Activated CD4-positive, alpha-beta memory T cell treated with anti-CD3 and anti-CD28 coated beads for 36 hours (primary cell): ENCODE measurements at regions of chr17 and their contacts with region 1.

Region 1: DNA sequence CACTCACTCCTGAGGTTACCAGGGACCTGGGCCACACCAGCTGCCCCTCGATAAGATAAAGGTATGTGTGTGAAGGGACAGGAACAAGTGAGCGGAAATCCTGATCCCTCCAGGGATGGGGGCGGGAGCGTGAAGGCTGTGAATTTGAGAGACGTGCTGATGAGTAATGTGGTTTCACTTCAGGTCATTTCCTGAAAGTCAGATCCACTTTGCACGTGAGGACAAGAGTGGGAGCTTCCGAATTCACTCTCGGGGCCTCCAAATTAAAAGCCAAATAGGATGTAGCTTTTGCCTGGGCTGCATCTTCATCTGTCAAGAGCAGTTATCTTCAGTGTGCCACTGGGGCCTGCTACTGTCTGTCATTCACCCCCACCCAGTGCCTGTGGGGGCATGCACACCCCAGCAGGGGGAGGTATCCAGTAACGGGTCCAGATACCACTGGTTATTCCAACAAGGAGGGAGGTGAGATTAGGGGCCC is 87.4 kb upstream of the LHX1 start:
- DNase-seq: peak; percentile 88
- H3K4me3 Mint-ChIP-seq: peak overlapping the region; percentile 62
- H3K27ac Mint-ChIP-seq: peak overlapping the region; percentile 82
- H3K4me1 Mint-ChIP-seq: peaks cover 36% of the 10 kb centered on the region
- H3K27me3 Mint-ChIP-seq: peaks cover under 1% of the 10 kb centered on the region

Region 2: DNA sequence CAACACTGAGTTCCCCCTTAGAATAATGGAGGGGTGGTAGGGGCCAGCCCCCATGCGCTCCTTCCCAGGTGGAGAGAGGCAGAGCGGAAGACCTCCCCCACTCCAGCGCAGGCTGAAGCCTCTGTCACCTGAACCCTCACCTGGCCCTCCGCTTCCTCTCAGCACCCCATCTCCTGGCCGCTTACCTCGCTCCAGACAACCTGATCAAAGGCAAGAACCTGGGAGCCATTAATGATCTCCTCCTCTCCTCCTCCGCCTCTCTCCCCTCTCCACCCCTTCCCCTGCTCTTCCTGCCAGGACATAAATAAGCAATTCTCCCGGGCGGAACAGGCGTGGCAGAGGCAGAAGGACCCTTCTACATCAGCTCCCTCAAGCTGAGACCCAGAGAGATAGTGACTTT is 22.8 kb before region 1 on chr17:
- CTCF ChIA-PET with region 1: no interaction called
- POLR2A ChIA-PET with region 1: no interaction called
- intact Hi-C with region 1: no loop called
- DNase-seq: no peak
- H3K4me3 Mint-ChIP-seq: no peak overlapping the region
- H3K27ac Mint-ChIP-seq: no peak overlapping the region
- H3K4me1 Mint-ChIP-seq: no peaks in the 10 kb centered on the region
- H3K27me3 Mint-ChIP-seq: peaks cover 33% of the 10 kb centered on the region

Region 3: GRCh38 chr17:36921095-36921851 is 71.4 kb after region 1 on chr17:
- CTCF ChIA-PET with region 1: no interaction called
- POLR2A ChIA-PET with region 1: no interaction called
- intact Hi-C with region 1: loop called (anchors 2 kb)
- DNase-seq: peak; percentile 90
- H3K4me3 Mint-ChIP-seq: peak overlapping the region; percentile 34
- H3K27ac Mint-ChIP-seq: peak overlapping the region; percentile 93
- H3K4me1 Mint-ChIP-seq: peaks cover 23% of the 10 kb centered on the region
- H3K27me3 Mint-ChIP-seq: peaks cover 31% of the 10 kb centered on the region

Region 4: GRCh38 chr17:36937966-36938565 is 88.2 kb after region 1 on chr17:
- CTCF ChIA-PET with region 1: no interaction called
- POLR2A ChIA-PET with region 1: no interaction called
- intact Hi-C with region 1: no loop called
- DNase-seq: peak; percentile 56
- H3K4me3 Mint-ChIP-seq: peak overlapping the region; percentile 60
- H3K27ac Mint-ChIP-seq: peak overlapping the region; percentile 28
- H3K4me1 Mint-ChIP-seq: peaks cover 70% of the 10 kb centered on the region
- H3K27me3 Mint-ChIP-seq: peaks cover 80% of the 10 kb centered on the region

Region 5: GRCh38 chr17:37025847-37026530 is 176.1 kb after region 1 on chr17:
- CTCF ChIA-PET with region 1: no interaction called
- POLR2A ChIA-PET with region 1: no interaction called
- intact Hi-C with region 1: loop called (anchors 1 kb)
- DNase-seq: peak; percentile 33
- H3K4me3 Mint-ChIP-seq: no peak overlapping the region
- H3K27ac Mint-ChIP-seq: peak overlapping the region; percentile 30
- H3K4me1 Mint-ChIP-seq: peaks cover 27% of the 10 kb centered on the region
- H3K27me3 Mint-ChIP-seq: no peaks in the 10 kb centered on the region